Prostate gland (tissue), 2 donors: ENCODE measurements at regions of chr12 and their contacts with region 1.

Region 1: GRCh38 chr12:130916251-130916911 is 37.3 kb upstream of the ADGRD1 start:
- DNase-seq: no peak
- H3K4me3 ChIP-seq: no peak overlapping the region
- H3K27ac ChIP-seq: no peak overlapping the region
- H3K4me1 ChIP-seq: no peaks in the 10 kb centered on the region
- H3K27me3 ChIP-seq: no peaks in the 10 kb centered on the region
- CTCF ChIP-seq: peak; percentile 43 to 93 (median 76)
- POLR2A ChIP-seq: no peak

Region 2: DNA sequence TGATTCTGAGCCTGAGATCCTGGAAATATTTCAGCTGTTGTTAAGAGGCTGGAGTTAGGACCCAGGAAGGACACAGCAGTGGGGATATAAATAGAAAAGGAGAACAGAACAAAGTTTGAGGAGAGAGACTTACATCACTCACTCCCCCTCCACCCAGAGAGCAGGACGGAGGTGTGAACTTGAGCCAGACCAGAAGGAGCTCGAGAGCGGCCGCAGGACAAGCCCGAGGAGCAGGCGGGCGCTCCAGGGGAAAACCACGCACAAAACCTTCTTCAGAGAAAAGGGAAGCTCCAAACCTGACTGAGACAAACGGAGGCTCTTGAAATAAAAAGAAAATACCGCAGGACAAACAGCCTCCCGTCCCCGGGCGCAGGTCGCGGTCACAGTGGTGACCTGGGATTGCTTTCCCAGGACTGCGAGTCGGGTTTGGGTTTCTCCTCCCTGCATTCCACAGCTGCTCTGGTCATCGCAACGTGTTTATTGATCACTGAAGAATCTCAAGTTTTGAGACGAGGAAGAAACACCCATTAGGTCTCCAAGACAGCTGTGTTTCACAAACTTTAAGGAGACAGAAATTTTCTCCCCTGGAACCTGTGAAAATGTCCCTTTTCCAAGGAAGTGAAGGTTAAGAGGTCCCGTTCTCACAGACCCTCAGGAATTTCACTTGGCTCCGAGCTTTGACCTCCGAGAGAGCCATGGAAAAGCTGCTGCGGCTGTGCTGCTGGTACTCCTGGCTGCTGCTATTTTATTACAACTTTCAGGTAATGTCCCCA is 37.6 kb after region 1 on chr12 and contains the start of gene ADGRD1:
- intact Hi-C with region 1: loop called (anchors 5 kb)
- DNase-seq: no peak
- H3K4me3 ChIP-seq: peak within 1 kb of the TSS; percentile 17
- H3K27ac ChIP-seq: peak within 1 kb of the TSS; percentile 37 to 42
- H3K4me1 ChIP-seq: no peaks in the 10 kb centered on the region
- H3K27me3 ChIP-seq: peaks cover 3% of the 10 kb centered on the region
- CTCF ChIP-seq: no peak
- POLR2A ChIP-seq: no peak
- total RNA-seq, gene ADGRD1: 4.3 to 20.9 TPM

Region 3: DNA sequence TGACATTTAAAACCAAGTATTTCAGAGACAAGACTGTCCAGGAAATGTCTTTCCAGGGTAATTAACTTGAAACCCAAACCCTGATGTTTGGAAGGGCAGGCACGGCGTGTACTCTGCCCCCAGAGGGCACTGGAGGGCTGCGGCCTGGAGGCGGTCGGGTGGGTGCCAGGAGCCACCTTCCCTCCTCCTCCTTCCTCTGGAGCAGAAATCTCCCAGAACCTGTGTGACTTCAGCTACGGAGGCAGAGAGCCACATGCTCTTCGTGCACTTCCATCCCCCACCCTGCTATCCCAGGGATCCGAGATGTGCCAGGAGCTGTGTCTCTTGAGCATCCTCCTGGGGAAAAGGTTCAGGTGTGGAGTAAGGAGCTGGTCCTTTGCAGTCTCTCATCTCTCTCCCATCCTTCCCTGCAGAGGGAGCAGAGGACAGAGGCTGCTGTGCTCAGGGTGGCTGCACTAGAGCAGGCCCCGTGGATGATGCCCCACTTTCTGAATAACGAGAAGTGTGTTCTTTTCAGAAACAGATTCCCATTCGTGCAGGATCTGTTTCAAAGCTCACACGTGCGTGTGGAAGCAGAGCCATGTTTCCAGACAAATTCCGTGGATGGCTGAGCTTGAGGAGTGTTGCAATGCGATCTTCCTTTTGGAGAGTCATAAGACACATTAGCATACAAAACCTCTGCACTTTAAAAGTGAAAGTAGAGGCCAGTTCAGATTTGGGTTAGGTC is 200.2 kb after region 1 on chr12:
- intact Hi-C with region 1: loop called (anchors 5 kb)
- DNase-seq: no peak
- H3K4me3 ChIP-seq: no peak overlapping the region
- H3K27ac ChIP-seq: no peak overlapping the region
- H3K4me1 ChIP-seq: no peaks in the 10 kb centered on the region
- H3K27me3 ChIP-seq: no peaks in the 10 kb centered on the region
- CTCF ChIP-seq: no peak
- POLR2A ChIP-seq: no peak

Region 4: GRCh38 chr12:131132118-131132892 is 215.9 kb after region 1 on chr12:
- intact Hi-C with region 1: loop called (anchors 5 kb)
- DNase-seq: peak; percentile 28
- H3K4me3 ChIP-seq: no peak overlapping the region
- H3K27ac ChIP-seq: no peak overlapping the region
- H3K4me1 ChIP-seq: no peaks in the 10 kb centered on the region
- H3K27me3 ChIP-seq: peaks cover 2% of the 10 kb centered on the region
- CTCF ChIP-seq: peak; percentile 32 to 74 (median 67)
- POLR2A ChIP-seq: no peak

Region 5: GRCh38 chr12:131830335-131830913 is 914.0 kb after region 1 on chr12:
- intact Hi-C with region 1: loop called (anchors 2 kb)
- DNase-seq: peak; percentile 57
- H3K4me3 ChIP-seq: peak overlapping the region; percentile 22 to 34
- H3K27ac ChIP-seq: peak overlapping the region; percentile 34 to 60
- H3K4me1 ChIP-seq: peaks cover 14% of the 10 kb centered on the region
- H3K27me3 ChIP-seq: peaks cover 14% of the 10 kb centered on the region
- CTCF ChIP-seq: peak in 3 of 4 experiments; percentile 47 to 69 (median 68)
- POLR2A ChIP-seq: no peak